Right cardiac atrium (tissue), 5 donors: ENCODE measurements at regions of chr1 and their contacts with region 1.

Region 1: DNA sequence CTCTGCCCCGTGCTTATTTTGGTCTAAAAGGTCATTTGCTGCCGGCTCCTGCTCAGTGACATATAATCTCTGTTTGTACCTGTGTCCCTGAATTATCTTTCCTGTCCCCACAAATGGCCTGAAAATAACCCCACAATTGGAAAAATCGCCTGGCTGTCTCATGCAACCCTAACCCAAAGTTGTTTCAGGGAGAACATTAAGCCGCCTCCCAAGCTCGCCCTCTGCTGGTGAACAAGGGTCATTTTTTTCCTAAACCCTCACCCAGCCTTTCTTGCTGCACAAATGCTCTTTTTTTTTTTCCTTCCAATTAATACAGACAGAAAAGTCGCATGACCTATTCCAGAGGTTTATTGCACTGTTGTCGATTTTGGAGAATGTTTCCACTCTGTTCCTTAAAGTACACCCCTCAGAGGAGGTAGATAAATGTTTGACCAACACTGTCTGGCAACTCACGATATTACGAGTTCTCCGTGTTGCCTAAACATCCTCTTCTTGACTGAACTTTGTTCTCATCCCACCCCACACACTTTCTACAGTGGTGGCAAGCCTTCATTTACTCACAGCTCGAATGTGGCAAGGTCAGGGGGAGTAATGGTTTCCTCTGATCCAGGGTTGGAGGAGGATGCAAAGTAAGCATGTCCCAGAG is 148.7 kb downstream of the ZZZ3 start:
- DNase-seq: peak in 2 of 3 donors; percentile 41 to 68
- ATAC-seq: peak; percentile 48 to 63
- H3K4me3 ChIP-seq: no peak overlapping the region
- H3K27ac ChIP-seq: no peak overlapping the region
- H3K4me1 ChIP-seq: no peaks in the 10 kb centered on the region
- H3K27me3 ChIP-seq: no peaks in the 10 kb centered on the region

Region 2: GRCh38 chr1:77143529-77144121 is 390.2 kb before region 1 on chr1:
- intact Hi-C with region 1: loop called in 2 of 4 experiments (anchors 5 kb)
- DNase-seq: no peak
- ATAC-seq: no peak
- H3K4me3 ChIP-seq: no peak overlapping the region
- H3K27ac ChIP-seq: no peak overlapping the region
- H3K4me1 ChIP-seq: no peaks in the 10 kb centered on the region
- H3K27me3 ChIP-seq: no peaks in the 10 kb centered on the region

Region 3: DNA sequence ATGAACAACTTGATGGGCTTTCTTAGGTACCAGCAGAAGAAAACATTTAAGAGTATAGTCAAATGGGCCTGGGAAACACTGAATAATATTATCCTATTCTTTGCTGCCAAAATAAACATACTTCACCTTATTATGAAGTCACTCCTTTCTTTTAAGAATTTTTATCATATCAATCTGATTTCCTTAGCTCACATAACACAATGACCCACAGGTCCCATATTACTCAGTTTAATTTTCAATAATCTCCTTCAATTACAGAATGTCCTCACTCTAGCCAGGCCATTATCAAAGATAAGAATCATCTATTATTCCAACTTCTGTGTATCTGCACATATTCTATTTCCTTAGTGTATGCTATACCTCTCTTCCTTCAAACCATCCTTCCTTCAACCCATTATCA is 377.6 kb before region 1 on chr1:
- intact Hi-C with region 1: loop called in 1 of 4 experiments (anchors 10 kb)
- DNase-seq: no peak
- ATAC-seq: no peak
- H3K4me3 ChIP-seq: no peak overlapping the region
- H3K27ac ChIP-seq: no peak overlapping the region
- H3K4me1 ChIP-seq: no peaks in the 10 kb centered on the region
- H3K27me3 ChIP-seq: no peaks in the 10 kb centered on the region

Region 4: DNA sequence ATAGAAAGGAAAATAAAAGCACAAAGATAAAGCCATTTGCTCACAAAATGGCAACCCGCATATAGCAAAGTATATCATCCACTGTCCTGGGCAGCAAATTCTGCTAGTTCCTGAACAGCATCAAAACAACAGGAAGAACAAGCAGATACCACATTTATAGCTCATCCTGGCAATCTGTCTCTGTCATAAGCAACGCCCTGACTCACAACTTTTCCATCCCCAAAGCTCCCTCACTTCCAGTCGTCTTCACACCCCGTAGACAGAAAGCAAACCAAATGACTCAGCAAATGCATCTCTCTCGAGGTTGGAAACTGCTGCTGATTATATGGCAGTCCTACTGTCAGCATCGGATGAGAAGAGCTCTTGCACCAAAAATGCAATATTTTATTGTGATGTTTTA is 186.1 kb before region 1 on chr1:
- intact Hi-C with region 1: no loop called
- DNase-seq: no peak
- ATAC-seq: peak in 1 of 2 donors; percentile 20
- H3K4me3 ChIP-seq: no peak overlapping the region
- H3K27ac ChIP-seq: no peak overlapping the region
- H3K4me1 ChIP-seq: no peaks in the 10 kb centered on the region
- H3K27me3 ChIP-seq: no peaks in the 10 kb centered on the region